ENCODE measurements at regions of chr9 and their contacts with region 1.

Region 1: GRCh38 chr9:83649080-83649479 is 26.1 kb downstream of the IDNK start:
- DNase-seq: peak; percentile 46 to 89
- H3K4me3 ChIP-seq: no peak overlapping the region
- H3K27ac ChIP-seq: no peak overlapping the region
- H3K4me1 ChIP-seq: peaks cover 0 to 3% (median 0%) of the 10 kb centered on the region in 4 experiments; a peak in 2 of 7 replicates
- H3K27me3 ChIP-seq: no peaks in the 10 kb centered on the region
- CTCF ChIP-seq: peak; percentile 82 to 91 (median 86)
- EP300 ChIP-seq: no peak
- POLR2A ChIP-seq: 0 out of 3 replicates have a peak, but pooled peaks of 1 of the 2 experiments have one; percentile 3
- RAD21 ChIP-seq: peak; percentile 88 to 89

Region 2: GRCh38 chr9:83622939-83623678 is 26.0 kb before region 1 on chr9 and contains the start of gene IDNK:
- CTCF ChIA-PET with region 1: interaction called, 75 read pairs
- POLR2A ChIA-PET with region 1: interaction called, 5 read pairs
- DNase-seq: peak in 1 of 2 experiments; percentile 78
- H3K4me3 ChIP-seq: peak within 1 kb of the TSS; percentile 73 to 74 (median 74)
- H3K27ac ChIP-seq: no peak within 1 kb of the TSS
- H3K4me1 ChIP-seq: peaks cover 0 to 2% (median 0%) of the 10 kb centered on the region in 4 experiments; a peak in 3 of 7 replicates
- H3K27me3 ChIP-seq: no peaks in the 10 kb centered on the region; a peak in 1 of 7 replicates
- CTCF ChIP-seq: no peak
- EP300 ChIP-seq: no peak
- POLR2A ChIP-seq: peak in 1 of 2 experiments; percentile 68; a peak in 1 of 3 replicates
- RAD21 ChIP-seq: no peak
- total RNA-seq, gene IDNK: 0.38 and 0.48 TPM in 2 replicates

Region 3: DNA sequence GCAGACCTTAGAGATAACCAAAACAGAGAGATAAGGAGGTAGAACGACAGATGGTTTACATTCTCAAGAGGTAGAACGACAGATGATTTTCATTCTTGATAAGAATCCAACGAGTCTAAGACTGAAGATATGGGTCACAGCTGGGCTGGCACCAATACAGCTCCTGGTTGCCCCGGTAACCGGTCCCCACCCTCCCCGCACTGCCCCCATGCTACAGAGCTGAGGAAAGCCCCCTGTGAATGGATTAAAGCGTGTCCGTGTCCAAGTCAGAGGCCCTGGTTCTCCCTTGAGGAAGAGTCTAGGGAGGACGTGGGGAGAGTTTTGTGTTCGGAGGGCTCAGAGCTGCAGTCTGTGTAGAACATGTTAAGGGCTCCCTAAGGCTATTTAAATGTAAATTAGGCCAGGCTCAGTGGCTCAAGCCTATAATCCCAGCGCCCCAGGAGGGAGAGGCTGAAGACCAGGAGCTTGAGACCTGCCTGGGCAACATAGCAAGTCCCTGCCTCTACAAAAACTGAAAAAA is 18.1 kb before region 1 on chr9:
- CTCF ChIA-PET with region 1: interaction called, 75 read pairs
- POLR2A ChIA-PET with region 1: interaction called, 5 read pairs
- DNase-seq: peak in 1 of 2 experiments; percentile 76
- H3K4me3 ChIP-seq: peak overlapping the region in 1 of 4 experiments; percentile 44; a peak in 2 of 8 replicates
- H3K27ac ChIP-seq: no peak overlapping the region
- H3K4me1 ChIP-seq: peaks cover 0 to 11% (median 3%) of the 10 kb centered on the region in 4 experiments; a peak in 1 of 7 replicates
- H3K27me3 ChIP-seq: no peaks in the 10 kb centered on the region
- CTCF ChIP-seq: no peak
- EP300 ChIP-seq: no peak
- POLR2A ChIP-seq: no peak
- RAD21 ChIP-seq: no peak

Region 4: GRCh38 chr9:83636813-83637212 is 12.3 kb before region 1 on chr9:
- CTCF ChIA-PET with region 1: interaction called, 75 read pairs
- POLR2A ChIA-PET with region 1: interaction called, 4 read pairs
- DNase-seq: no peak
- H3K4me3 ChIP-seq: no peak overlapping the region
- H3K27ac ChIP-seq: no peak overlapping the region
- H3K4me1 ChIP-seq: no peaks in the 10 kb centered on the region
- H3K27me3 ChIP-seq: no peaks in the 10 kb centered on the region
- CTCF ChIP-seq: no peak
- EP300 ChIP-seq: no peak
- POLR2A ChIP-seq: no peak
- RAD21 ChIP-seq: no peak

Measured in H1 (cell line).